Adrenal gland (tissue), 19 donors: ENCODE measurements at regions of chr1 and their contacts with region 1.

Region 1: GRCh38 chr1:117067533-117068370 is 7.6 kb downstream of the TTF2 start:
- DNase-seq: peak; percentile 51 to 84 (median 70)
- H3K4me3 ChIP-seq: no peak overlapping the region
- H3K27ac ChIP-seq: no peak overlapping the region
- H3K4me1 ChIP-seq: no peaks in the 10 kb centered on the region
- H3K27me3 ChIP-seq: no peaks in the 10 kb centered on the region
- CTCF ChIP-seq: peak; percentile 53 to 89 (median 86)
- POLR2A ChIP-seq: no peak

Region 2: GRCh38 chr1:116826818-116827606 is 240.7 kb before region 1 on chr1:
- intact Hi-C with region 1: no loop called
- DNase-seq: no peak
- H3K4me3 ChIP-seq: no peak overlapping the region
- H3K27ac ChIP-seq: no peak overlapping the region
- H3K4me1 ChIP-seq: no peaks in the 10 kb centered on the region
- H3K27me3 ChIP-seq: no peaks in the 10 kb centered on the region
- CTCF ChIP-seq: no peak
- POLR2A ChIP-seq: no peak

Region 3: DNA sequence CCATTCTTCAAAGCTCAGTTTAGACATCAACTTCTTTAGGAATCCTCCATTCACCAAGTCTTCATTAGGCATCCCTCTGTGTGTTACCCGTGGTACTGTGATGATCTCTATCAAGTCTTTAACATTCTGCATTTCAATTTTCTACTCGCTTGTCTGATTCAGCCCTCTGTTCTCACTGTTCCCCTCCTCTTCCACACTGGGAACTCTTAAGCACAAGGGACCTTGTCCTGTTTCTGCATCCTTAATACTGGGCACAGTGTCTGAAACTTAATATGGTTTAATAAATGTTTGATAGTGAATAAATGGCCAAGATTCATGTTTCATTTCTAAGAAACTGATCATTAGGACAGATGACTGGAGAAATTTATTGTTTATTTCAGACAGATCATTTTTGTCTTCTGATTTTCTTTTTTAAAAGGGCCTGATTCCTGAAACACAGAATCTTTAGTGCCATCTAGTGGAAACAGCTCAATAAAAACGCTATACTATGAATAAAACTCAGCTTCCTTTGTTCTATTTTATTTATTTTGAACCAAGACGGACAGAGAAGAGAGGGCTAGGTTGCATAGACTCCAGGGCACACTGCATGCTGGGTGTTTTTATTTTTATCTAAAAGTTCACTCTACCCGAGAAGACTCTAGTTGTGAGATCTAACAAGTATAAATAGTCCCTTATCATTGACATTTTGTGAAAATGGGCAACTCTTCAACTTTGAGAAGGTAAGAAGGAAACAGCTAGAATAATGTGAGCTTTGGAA is 60.7 kb after region 1 on chr1:
- intact Hi-C with region 1: loop called (anchors 5 kb)
- DNase-seq: no peak
- H3K4me3 ChIP-seq: no peak overlapping the region
- H3K27ac ChIP-seq: no peak overlapping the region
- H3K4me1 ChIP-seq: no peaks in the 10 kb centered on the region
- H3K27me3 ChIP-seq: no peaks in the 10 kb centered on the region
- CTCF ChIP-seq: peak; percentile 32 to 63 (median 56)
- POLR2A ChIP-seq: no peak

Region 4: DNA sequence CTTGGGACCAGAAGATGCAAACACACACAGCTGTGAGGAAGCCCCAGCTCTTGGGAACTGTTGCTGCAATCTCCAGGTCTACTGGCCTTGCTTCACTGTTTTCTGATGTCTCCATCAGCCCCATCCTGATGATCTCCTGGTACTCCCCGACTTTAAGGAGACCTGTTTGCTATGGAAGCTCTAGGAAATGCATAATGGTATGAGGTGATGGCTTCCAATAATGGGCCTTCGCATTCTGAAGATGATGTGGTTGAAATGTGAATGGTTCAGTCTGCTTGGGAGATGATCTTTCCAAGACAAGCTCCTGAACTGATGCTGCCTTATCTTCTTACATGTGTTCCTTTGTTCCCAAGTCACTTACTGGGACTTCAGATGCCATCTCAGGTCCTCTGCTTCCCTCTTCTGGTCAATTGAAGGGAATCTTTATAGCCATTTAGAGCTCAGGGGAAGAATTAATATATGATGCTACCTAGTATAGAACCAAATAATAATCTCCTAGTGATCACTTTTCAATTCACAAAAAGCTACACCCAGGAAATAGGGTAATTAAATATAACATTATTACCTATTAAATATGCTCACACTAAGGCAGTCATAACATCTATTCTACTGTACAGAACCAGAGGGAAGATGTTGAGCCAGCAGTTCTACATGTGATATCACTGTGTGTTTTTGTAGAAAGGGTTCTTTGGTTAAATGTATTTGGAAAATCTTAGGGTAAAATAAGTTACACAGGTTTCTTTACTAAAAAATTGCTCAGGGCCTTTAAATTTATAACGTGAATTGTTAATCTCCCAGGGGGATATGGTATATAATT is 216.9 kb after region 1 on chr1:
- intact Hi-C with region 1: loop called (anchors 5 to 10 kb)
- DNase-seq: peak in 3 of 7 donors; percentile 11 to 23 (median 21)
- H3K4me3 ChIP-seq: no peak overlapping the region
- H3K27ac ChIP-seq: no peak overlapping the region
- H3K4me1 ChIP-seq: no peaks in the 10 kb centered on the region
- H3K27me3 ChIP-seq: no peaks in the 10 kb centered on the region
- CTCF ChIP-seq: peak in 5 of 6 experiments; percentile 46 to 64 (median 58)
- POLR2A ChIP-seq: no peak

Region 5: GRCh38 chr1:117335356-117336086 is 267.8 kb after region 1 on chr1:
- intact Hi-C with region 1: no loop called
- DNase-seq: no peak
- H3K4me3 ChIP-seq: no peak overlapping the region
- H3K27ac ChIP-seq: no peak overlapping the region
- H3K4me1 ChIP-seq: no peaks in the 10 kb centered on the region
- H3K27me3 ChIP-seq: no peaks in the 10 kb centered on the region
- CTCF ChIP-seq: no peak
- POLR2A ChIP-seq: no peak